Vagina (tissue), 2 donors: ENCODE measurements at regions of chr1 and their contacts with region 1.

Region 1: DNA sequence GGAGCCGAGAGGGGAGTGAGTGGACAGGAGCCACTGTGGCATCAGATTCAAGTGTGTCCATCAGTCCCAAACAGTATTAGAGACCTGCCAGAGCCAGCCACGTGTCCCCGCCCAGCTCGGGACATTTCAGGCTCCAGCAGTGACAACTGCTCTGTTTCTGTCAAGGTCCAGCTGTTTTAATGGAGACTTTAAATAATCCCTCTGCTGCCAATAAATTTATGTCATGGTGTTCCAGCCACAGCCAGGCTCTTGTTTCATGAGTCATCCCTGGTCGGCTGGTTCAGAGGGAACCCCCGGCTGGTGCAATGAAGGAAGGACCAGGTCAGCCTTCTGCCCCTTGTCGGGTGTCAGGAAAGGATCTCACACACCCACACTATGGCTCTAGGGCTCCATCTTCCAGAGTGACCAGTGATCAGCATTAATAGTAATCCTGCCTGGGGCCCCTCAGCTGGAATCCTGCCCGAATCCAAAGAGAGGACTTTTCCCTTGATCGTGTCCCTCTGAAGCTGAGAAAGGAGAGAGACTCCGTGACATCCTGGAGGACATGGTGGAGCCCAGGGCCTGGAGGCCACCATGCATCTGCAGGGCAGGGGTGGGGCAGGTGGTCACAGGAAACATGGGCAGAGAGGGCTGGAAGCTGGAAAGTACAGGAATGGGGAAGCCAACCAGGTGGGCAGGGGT is 197.3 kb downstream of the MATN1 start:
- DNase-seq: no peak
- H3K4me3 ChIP-seq: no peak overlapping the region
- H3K27ac ChIP-seq: peak overlapping the region; percentile 88
- H3K4me1 ChIP-seq: peaks cover 46% of the 10 kb centered on the region
- H3K27me3 ChIP-seq: no peaks in the 10 kb centered on the region
- CTCF ChIP-seq: no peak
- POLR2A ChIP-seq: no peak

Region 2: DNA sequence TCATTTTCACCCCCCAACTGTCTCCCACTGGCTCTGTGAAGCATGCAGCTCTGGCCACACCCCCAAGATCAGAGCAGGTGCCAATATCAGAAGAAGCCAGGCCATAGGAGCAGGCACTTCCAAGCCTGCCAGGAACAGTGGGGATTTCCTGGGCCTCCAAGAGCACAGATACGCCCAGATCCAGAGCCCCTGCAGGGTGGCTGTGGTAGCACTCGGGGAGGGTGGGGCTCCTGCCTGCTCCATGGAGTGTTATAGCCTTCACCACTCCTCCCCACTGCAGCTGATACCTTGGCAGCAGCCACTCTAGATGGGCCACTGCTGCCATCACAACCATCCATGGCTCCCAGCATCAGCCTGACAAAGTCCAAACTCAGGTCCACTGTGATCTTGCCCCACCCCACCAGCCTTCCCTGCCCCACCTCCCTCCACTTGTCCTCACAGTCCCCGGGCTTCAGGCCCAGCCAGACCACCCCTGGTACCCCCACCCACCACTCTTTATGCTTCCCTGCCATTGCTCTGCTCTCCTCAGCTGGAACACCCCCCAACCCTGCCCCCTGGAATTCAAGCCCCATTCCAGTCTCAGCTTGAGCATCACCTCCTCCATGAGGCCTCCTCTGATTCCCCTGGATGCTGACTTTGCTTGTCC is 251.0 kb before region 1 on chr1:
- intact Hi-C with region 1: no loop called
- DNase-seq: peak in 1 of 2 donors; percentile 93
- H3K4me3 ChIP-seq: no peak overlapping the region
- H3K27ac ChIP-seq: no peak overlapping the region
- H3K4me1 ChIP-seq: no peaks in the 10 kb centered on the region
- H3K27me3 ChIP-seq: no peaks in the 10 kb centered on the region
- CTCF ChIP-seq: no peak
- POLR2A ChIP-seq: no peak

Region 3: GRCh38 chr1:30601316-30602085 is 75.4 kb after region 1 on chr1:
- intact Hi-C with region 1: loop called (anchors 2 kb)
- DNase-seq: peak; percentile 44 to 90
- H3K4me3 ChIP-seq: no peak overlapping the region
- H3K27ac ChIP-seq: no peak overlapping the region
- H3K4me1 ChIP-seq: no peaks in the 10 kb centered on the region
- H3K27me3 ChIP-seq: no peaks in the 10 kb centered on the region
- CTCF ChIP-seq: no peak
- POLR2A ChIP-seq: no peak

Region 4: DNA sequence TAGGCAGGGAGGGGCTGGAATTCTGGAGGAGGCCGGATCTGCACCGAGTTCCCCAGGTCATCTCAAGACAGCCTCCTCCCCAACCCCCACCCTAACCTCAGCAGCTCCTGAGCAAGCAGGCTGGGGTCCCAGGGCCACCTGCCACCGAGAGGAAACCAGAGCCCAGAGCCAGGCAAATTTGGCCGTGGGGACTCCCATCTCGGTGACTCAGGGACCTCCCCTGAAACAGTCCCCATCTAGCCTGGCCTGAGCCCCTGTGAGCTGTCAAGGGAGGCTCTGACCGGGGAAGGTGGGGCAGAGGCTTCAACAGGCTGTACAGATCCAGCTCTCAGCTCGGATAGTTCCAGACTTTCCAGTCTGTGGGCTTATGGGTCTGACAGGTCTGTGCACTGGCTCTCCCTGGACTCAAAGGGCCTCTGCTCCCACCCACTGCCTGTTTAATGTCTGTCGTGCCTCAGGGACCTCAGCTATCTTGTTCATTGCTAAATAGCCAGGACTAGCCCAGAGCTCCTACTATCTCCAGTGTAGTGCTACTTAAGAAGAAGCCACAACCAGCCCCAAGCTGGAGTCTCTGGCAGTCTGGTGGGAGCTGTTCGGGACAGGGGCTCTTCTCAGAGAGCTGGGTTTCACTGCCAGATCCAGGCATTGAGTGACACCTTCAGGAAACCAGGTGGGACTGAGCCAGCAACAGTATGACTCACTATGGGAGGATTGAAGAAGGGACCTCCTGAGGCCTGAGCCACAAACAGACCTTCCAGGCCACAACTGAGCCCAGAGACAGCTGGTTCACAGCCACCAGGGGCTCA is 171.7 kb after region 1 on chr1:
- intact Hi-C with region 1: loop called (anchors 10 kb)
- DNase-seq: no peak
- H3K4me3 ChIP-seq: no peak overlapping the region
- H3K27ac ChIP-seq: peak overlapping the region; percentile 97
- H3K4me1 ChIP-seq: peaks cover 74% of the 10 kb centered on the region
- H3K27me3 ChIP-seq: no peaks in the 10 kb centered on the region
- CTCF ChIP-seq: no peak
- POLR2A ChIP-seq: no peak